Activated CD8-positive, alpha-beta T cell treated with anti-CD3 and anti-CD28 coated beads, Interleukin-2, amount 10 ng/mL, durations not matched to agents 7 days and 5 days (primary cell): ENCODE measurements at regions of chr1 and their contacts with region 1.

Region 1: GRCh38 chr1:160629286-160630210 is 17.3 kb downstream of the SLAMF1 start:
- DNase-seq: peak; percentile 90
- ATAC-seq: peak; percentile 75
- H3K4me3 Mint-ChIP-seq: peak overlapping the region; percentile 70
- H3K27ac Mint-ChIP-seq: peak overlapping the region; percentile 92
- H3K4me1 Mint-ChIP-seq: peaks cover 97% of the 10 kb centered on the region
- H3K27me3 Mint-ChIP-seq: no peaks in the 10 kb centered on the region

Region 2: DNA sequence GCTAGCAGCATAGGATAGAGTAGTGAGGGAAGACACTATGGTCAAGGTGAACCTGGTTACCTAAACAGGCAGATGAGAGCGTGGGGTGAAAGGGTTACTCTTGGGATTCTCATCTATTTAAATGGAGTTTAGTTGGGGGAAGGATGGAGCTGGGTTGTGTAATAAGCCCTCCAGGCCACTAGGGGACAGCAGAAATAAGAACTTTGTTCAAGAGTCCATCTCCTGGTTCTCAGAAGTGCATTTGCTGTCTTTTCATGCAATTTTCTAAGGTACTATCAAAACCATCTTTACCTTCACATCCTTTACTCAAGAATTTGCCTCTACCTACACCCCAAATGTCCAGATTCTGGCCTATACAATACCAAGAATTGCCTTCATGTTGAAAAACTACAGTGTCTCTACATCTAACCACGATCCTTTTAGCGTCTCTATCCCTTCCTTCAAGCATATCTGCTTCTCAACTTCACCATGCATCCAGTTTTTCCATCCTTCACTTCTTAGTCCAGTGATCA is 10.7 kb before region 1 on chr1:
- CTCF ChIA-PET with region 1: interaction called, 40 read pairs
- POLR2A ChIA-PET with region 1: interaction called, 19 read pairs
- DNase-seq: peak; percentile 61
- ATAC-seq: no peak
- H3K4me3 Mint-ChIP-seq: no peak overlapping the region
- H3K27ac Mint-ChIP-seq: peak overlapping the region; percentile 55
- H3K4me1 Mint-ChIP-seq: peaks cover 73% of the 10 kb centered on the region
- H3K27me3 Mint-ChIP-seq: no peaks in the 10 kb centered on the region

Region 3: DNA sequence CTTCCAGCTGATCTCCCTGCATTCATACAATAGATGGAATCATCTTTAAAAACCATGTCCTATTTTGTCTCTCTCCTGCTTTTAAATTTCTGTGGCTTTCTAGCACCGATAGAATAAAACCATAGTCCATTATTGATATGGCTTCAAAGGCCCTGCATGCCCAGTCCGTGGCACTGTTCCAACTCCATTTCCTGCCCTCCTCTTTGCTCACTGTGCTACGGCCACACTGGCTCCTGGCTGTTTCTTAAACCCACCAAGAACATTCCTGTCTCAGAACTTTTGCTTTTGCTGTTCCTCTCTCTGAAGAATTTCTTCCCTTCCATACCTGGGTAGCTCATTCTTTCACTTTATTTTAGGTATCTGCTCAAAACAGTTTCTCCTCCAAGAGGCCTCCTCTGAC is 10.1 kb after region 1 on chr1:
- CTCF ChIA-PET with region 1: interaction called, 22 read pairs
- POLR2A ChIA-PET with region 1: interaction called, 51 read pairs
- DNase-seq: no peak
- ATAC-seq: no peak
- H3K4me3 Mint-ChIP-seq: peak overlapping the region; percentile 56
- H3K27ac Mint-ChIP-seq: peak overlapping the region; percentile 90
- H3K4me1 Mint-ChIP-seq: peaks cover 91% of the 10 kb centered on the region
- H3K27me3 Mint-ChIP-seq: no peaks in the 10 kb centered on the region

Region 4: GRCh38 chr1:160646711-160647328 is 17.3 kb after region 1 on chr1 and contains the start of gene SLAMF1:
- CTCF ChIA-PET with region 1: interaction called, 22 read pairs
- POLR2A ChIA-PET with region 1: interaction called, 51 read pairs
- DNase-seq: peak; percentile 55
- ATAC-seq: peak; percentile 53
- H3K4me3 Mint-ChIP-seq: peak within 1 kb of the TSS; percentile 87
- H3K27ac Mint-ChIP-seq: peak within 1 kb of the TSS; percentile 82
- H3K4me1 Mint-ChIP-seq: peaks cover 63% of the 10 kb centered on the region
- H3K27me3 Mint-ChIP-seq: no peaks in the 10 kb centered on the region
- total RNA-seq, gene SLAMF1: 48.5 to 50.1 TPM

Region 5: DNA sequence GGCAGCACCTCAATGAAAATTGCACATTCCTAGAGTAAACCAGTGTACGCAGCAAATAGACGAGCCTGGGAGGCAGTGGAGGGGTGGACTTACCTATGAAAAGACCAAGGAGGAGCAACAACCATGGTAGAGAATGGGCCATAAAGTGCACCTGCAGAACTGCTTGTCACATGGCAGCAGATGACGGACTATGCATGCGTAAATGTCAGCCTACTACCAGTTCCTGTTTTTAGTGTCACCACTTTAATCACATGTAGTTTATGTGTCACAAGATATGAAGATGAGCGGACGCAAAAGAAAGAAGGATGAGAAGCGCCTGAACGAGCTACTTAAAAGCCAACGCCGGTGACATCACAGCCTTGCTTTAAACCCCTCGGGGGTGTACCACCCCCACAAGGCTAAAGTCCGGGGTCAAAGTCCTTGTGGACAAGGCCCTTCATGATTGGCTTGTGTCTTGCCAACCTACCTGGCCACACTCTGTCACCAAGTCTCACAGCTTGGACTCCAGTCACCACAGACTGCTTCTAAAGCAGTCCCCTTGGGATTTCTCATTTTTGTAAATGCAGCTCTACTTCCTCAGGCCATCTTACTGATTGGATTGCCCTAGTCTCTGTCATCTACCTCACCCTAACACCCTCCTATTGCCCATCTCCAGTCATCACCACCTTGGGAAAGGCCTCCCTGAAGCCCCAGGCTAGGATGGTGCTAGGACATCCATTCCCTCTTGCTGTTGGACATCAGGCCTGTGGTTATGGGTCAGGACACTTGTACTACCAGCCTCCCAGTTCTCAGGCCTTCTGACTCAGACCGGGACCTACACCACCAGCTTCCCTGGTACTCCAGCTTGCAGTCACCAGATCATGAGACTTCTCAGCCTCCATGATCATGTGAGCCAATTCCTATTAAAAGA is 160.4 kb after region 1 on chr1:
- CTCF ChIA-PET with region 1: no interaction called
- POLR2A ChIA-PET with region 1: no interaction called
- DNase-seq: no peak
- ATAC-seq: no peak
- H3K4me3 Mint-ChIP-seq: no peak overlapping the region
- H3K27ac Mint-ChIP-seq: no peak overlapping the region
- H3K4me1 Mint-ChIP-seq: peaks cover 10% of the 10 kb centered on the region
- H3K27me3 Mint-ChIP-seq: peaks cover 2% of the 10 kb centered on the region